ENCODE measurements at regions of chr18 and their contacts with region 1.

Region 1: DNA sequence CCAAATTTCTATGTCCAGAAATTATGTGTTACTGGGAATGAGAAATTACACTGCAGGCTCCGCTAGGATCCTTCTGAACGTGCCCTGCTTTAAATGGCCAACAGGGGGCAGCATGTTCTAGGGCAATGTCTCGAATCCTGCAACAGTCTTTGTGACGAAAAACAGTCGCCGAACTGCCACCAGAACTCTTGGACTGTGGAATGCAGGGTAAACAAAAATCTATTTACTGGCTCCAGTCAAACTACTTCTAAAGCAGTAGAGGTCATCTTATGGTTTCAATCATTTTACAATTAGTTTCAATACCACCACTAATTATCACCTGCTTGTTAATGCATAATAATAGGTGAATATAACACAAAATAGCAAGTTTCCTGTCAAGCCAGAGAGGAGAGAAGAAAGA is 9.8 kb upstream of the ZNF397 start:
- DNase-seq: peak; percentile 7
- H3K4me3 ChIP-seq: 0 out of 2 replicates have a peak overlapping the region, but pooled peaks have one; percentile 20
- CTCF ChIP-seq: peak; percentile 92

Region 2: DNA sequence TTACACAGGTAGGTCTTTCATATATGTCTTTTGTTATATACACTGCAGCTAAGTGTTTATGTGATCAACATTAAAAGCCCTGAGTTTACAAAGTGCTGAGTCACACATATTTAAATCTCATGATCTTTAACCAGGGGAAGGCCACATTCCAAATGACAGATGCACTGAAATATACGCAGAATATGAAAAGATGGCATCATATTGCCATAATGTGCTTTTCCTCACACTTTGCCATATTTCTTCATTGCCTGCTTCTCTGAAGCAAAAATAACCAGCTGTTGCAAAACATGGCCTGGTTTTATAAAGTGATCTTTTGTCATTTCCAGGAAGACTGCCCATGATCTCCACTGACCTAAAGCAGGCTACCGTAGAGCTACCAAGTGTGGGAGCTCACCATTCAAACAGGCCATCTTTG is 283.3 kb before region 1 on chr18:
- CTCF ChIA-PET with region 1: no interaction called
- POLR2A ChIA-PET with region 1: no interaction called
- DNase-seq: no peak
- H3K4me3 ChIP-seq: no peak overlapping the region
- CTCF ChIP-seq: no peak

Region 3: GRCh38 chr18:35343936-35344735 is 113.1 kb after region 1 on chr18 and contains the start of gene ZNF24:
- CTCF ChIA-PET with region 1: interaction called, 17 read pairs
- POLR2A ChIA-PET with region 1: no interaction called
- DNase-seq: no peak
- H3K4me3 ChIP-seq: peak within 1 kb of the TSS; percentile 97
- CTCF ChIP-seq: no peak

Region 4: DNA sequence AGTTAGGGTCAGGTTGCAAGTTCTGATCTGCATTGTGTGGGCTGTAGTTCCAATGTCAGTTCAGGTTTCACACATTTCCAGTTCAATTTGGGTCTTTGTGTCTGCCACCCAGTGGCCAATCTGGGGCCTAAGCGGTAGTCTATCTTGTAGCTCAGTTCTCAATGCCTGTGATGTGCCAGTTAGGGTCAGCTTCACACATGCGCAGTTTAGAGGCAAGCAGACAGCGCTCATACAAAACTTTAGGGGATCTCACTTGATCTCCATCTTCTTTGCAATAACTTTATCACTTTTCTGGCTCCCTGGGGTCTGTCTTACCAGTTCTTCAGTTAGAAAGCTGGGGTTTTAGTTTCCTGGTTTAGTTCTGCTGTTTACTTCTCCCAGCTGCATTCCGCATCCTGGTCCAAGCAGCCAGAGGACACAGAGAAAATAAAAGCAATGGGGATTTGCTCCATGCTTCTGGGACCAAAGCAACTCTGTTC is 124.1 kb after region 1 on chr18:
- CTCF ChIA-PET with region 1: interaction called, 65 read pairs
- POLR2A ChIA-PET with region 1: no interaction called
- DNase-seq: peak; percentile 36
- H3K4me3 ChIP-seq: no peak overlapping the region
- CTCF ChIP-seq: peak; percentile 79

Region 5: GRCh38 chr18:35386600-35387351 is 155.7 kb after region 1 on chr18:
- CTCF ChIA-PET with region 1: interaction called, 20 read pairs
- POLR2A ChIA-PET with region 1: no interaction called
- DNase-seq: no peak
- H3K4me3 ChIP-seq: no peak overlapping the region
- CTCF ChIP-seq: peak; percentile 75

Measured in AG04449 (cell line).